Aorta (tissue), 5 donors: ENCODE measurements at regions of chr11 and their contacts with region 1.

Region 1: GRCh38 chr11:103947546-103947919 is 88.9 kb upstream of the DDI1 start:
- DNase-seq: no peak
- ATAC-seq: peak; percentile 41
- H3K4me3 ChIP-seq: peak overlapping the region in 1 of 2 donors; percentile 5
- H3K27ac ChIP-seq: peak overlapping the region in 1 of 2 donors; percentile 79
- H3K4me1 ChIP-seq: peaks cover 5% of the 10 kb centered on the region in 2 donors
- H3K27me3 ChIP-seq: no peaks in the 10 kb centered on the region

Region 2: GRCh38 chr11:103624708-103625623 is 322.6 kb before region 1 on chr11:
- intact Hi-C with region 1: no loop called
- DNase-seq: no peak
- ATAC-seq: no peak
- H3K4me3 ChIP-seq: no peak overlapping the region
- H3K27ac ChIP-seq: no peak overlapping the region
- H3K4me1 ChIP-seq: no peaks in the 10 kb centered on the region
- H3K27me3 ChIP-seq: no peaks in the 10 kb centered on the region

Region 3: GRCh38 chr11:104118105-104118744 is 170.7 kb after region 1 on chr11:
- intact Hi-C with region 1: loop called in 1 of 2 experiments (anchors 10 kb)
- DNase-seq: no peak
- ATAC-seq: no peak
- H3K4me3 ChIP-seq: no peak overlapping the region
- H3K27ac ChIP-seq: no peak overlapping the region
- H3K4me1 ChIP-seq: peaks cover 0 to 2% of the 10 kb centered on the region in 2 donors
- H3K27me3 ChIP-seq: no peaks in the 10 kb centered on the region